Heart left ventricle (tissue), 16 donors: ENCODE measurements at regions of chr1 and their contacts with region 1.

Region 1: GRCh38 chr1:66725885-66726665 is 26.2 kb upstream of the DYNLT5 start:
- DNase-seq: peak in 4 of 5 donors; percentile 26 to 43 (median 40)
- ATAC-seq: peak; percentile 58 to 85 (median 80)
- H3K4me3 ChIP-seq: no peak overlapping the region
- H3K27ac ChIP-seq: no peak overlapping the region
- H3K4me1 ChIP-seq: peaks cover 0 to 14% (median 2%) of the 10 kb centered on the region in 12 donors
- H3K27me3 ChIP-seq: no peaks in the 10 kb centered on the region
- CTCF ChIP-seq: peak; percentile 91 to 99 (median 96)
- POLR2A ChIP-seq: no peak

Region 2: DNA sequence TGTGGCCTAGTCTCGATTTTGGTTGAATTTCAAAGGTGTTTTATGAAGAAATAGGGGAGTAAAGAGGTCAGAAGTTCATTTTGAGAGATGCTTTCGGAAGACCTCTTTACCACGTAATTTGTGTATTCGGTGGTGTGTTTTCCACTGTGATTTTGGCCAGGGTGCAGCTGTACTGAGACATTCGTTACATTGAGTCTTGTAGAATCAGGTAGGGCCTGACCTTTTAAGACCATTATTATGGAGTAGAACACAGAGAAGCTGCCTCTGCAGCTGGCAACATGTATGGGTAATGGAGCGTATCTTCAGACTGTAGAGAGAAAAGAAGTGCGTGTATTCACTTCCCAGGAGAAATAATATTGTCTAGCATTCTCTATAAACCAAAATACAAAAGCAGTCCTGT is 606.9 kb before region 1 on chr1:
- intact Hi-C with region 1: no loop called
- DNase-seq: no peak
- ATAC-seq: no peak
- H3K4me3 ChIP-seq: no peak overlapping the region
- H3K27ac ChIP-seq: no peak overlapping the region
- H3K4me1 ChIP-seq: no peaks in the 10 kb centered on the region
- H3K27me3 ChIP-seq: no peaks in the 10 kb centered on the region
- CTCF ChIP-seq: no peak
- POLR2A ChIP-seq: no peak

Region 3: GRCh38 chr1:66253330-66253921 is 472.6 kb before region 1 on chr1:
- intact Hi-C with region 1: loop called in 9 of 10 experiments (anchors 2 to 5 kb)
- DNase-seq: peak in 1 of 5 donors; percentile 23
- ATAC-seq: peak; percentile 88 to 94 (median 92)
- H3K4me3 ChIP-seq: no peak overlapping the region
- H3K27ac ChIP-seq: no peak overlapping the region
- H3K4me1 ChIP-seq: peaks cover 0 to 25% (median 0%) of the 10 kb centered on the region in 12 donors
- H3K27me3 ChIP-seq: no peaks in the 10 kb centered on the region
- CTCF ChIP-seq: peak; percentile 72 to 93 (median 87)
- POLR2A ChIP-seq: no peak

Region 4: GRCh38 chr1:66452162-66452561 is 273.9 kb before region 1 on chr1:
- intact Hi-C with region 1: loop called in 4 of 10 experiments (anchors 5 to 10 kb)
- DNase-seq: no peak
- ATAC-seq: no peak
- H3K4me3 ChIP-seq: no peak overlapping the region
- H3K27ac ChIP-seq: no peak overlapping the region
- H3K4me1 ChIP-seq: peaks cover 0 to 24% (median 10%) of the 10 kb centered on the region in 12 donors
- H3K27me3 ChIP-seq: no peaks in the 10 kb centered on the region
- CTCF ChIP-seq: peak in 1 of 12 donors; percentile 14
- POLR2A ChIP-seq: no peak

Region 5: GRCh38 chr1:66521721-66522365 is 204.2 kb before region 1 on chr1:
- intact Hi-C with region 1: loop called in 1 of 10 experiments (anchors 10 kb)
- DNase-seq: no peak
- ATAC-seq: peak in 2 of 4 donors; percentile 33 to 70
- H3K4me3 ChIP-seq: no peak overlapping the region
- H3K27ac ChIP-seq: no peak overlapping the region
- H3K4me1 ChIP-seq: no peaks in the 10 kb centered on the region
- H3K27me3 ChIP-seq: no peaks in the 10 kb centered on the region
- CTCF ChIP-seq: no peak
- POLR2A ChIP-seq: no peak

Region 6: DNA sequence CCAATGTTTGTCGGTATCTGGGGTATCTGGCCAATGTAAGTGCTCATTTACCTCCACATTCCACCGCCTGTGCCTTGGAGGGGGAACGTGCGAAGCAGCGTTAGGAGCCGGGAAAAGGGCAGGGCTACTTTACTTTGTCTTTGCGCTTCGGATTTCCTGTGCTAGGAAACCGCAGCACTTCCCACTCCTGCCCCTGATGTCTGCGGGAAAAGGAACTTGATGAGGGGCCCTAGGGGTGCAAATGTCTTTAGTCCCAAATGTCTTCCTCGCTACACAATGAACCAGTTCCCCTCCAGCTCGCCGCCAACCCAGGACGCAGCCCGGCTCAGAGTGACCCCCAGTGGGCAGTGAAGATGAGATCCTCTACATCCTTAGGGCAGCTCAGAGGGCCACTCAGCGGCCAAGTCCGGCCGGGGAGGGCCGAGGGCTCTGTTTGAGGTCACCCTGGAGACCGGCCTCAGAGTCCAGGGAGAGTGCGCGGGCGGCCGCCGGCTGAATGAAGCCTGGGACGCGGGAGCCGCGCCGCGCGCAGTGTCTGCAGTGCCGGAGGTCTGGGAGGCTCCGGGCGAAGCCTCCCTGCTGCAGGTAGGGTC is 26.0 kb after region 1 on chr1 and contains the start of gene DYNLT5:
- intact Hi-C with region 1: loop called in 1 of 10 experiments (anchors 1 kb)
- DNase-seq: peak; percentile 70 to 87 (median 72)
- ATAC-seq: peak; percentile 86 to 97 (median 96)
- H3K4me3 ChIP-seq: peak within 1 kb of the TSS in 11 of 12 donors; percentile 35 to 68 (median 59)
- H3K27ac ChIP-seq: peak within 1 kb of the TSS; percentile 29 to 83 (median 76)
- H3K4me1 ChIP-seq: peaks cover 0 to 21% (median 9%) of the 10 kb centered on the region in 12 donors
- H3K27me3 ChIP-seq: peaks cover 0 to 10% (median 0%) of the 10 kb centered on the region in 9 donors
- CTCF ChIP-seq: peak in 8 of 12 donors; percentile 10 to 50 (median 32)
- POLR2A ChIP-seq: peak in 1 of 2 donors; percentile 12
- total RNA-seq, gene DYNLT5: 0.48 to 7.3 (median 1.8) TPM